Prostate gland (tissue), 2 donors: ENCODE measurements at regions of chr10 and their contacts with region 1.

Region 1: GRCh38 chr10:32055813-32056600 is at the start of gene KIF5B:
- DNase-seq: peak; percentile 86
- H3K4me3 ChIP-seq: peak within 1 kb of the TSS; percentile 66 to 97
- H3K27ac ChIP-seq: peak within 1 kb of the TSS; percentile 97 to 99
- H3K4me1 ChIP-seq: no peaks in the 10 kb centered on the region
- H3K27me3 ChIP-seq: no peaks in the 10 kb centered on the region
- CTCF ChIP-seq: peak in 1 of 4 experiments; percentile 8
- POLR2A ChIP-seq: peak; percentile 99
- total RNA-seq, gene KIF5B: 98.2 to 102 TPM

Region 2: GRCh38 chr10:31770307-31770902 is 285.6 kb before region 1 on chr10:
- intact Hi-C with region 1: no loop called
- DNase-seq: no peak
- H3K4me3 ChIP-seq: no peak overlapping the region
- H3K27ac ChIP-seq: no peak overlapping the region
- H3K4me1 ChIP-seq: no peaks in the 10 kb centered on the region
- H3K27me3 ChIP-seq: no peaks in the 10 kb centered on the region
- CTCF ChIP-seq: peak; percentile 31 to 75 (median 62)
- POLR2A ChIP-seq: no peak

Region 3: DNA sequence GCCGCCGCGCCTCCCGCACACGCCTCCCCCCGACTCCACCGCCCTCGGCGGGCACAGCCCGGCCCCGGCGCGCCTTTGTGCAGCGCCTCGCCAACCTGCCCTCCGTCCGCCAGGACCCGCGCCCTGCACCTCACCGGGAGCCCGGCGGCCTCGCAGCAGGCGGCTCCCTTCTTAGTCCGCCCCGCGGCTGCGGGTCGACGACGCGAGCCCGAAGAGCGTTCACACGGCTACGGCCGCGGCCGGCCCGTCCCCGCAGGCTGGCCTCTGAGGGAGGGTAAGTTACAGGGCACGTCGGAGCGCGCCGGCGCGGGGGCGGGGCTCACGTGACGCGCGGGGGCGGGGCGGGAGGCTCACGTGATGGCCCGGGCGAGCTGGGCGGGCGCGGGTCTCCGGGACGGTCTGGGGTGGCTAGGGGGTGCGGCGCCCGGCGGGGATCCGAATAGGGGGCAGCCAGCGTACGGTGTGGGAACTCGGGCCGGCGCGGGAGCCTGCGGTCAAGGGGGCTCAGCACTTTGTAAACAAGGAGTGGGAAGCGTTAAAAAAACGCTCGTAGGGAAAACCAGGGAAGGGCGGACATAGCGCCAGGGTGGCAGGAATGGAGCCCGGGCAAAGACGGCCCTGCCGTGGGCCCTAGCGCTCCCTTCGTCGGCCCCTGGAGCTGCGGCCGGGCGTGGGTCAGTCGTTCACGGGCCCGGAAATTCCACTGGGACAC is 127.3 kb before region 1 on chr10 and contains the start of gene ARHGAP12:
- intact Hi-C with region 1: loop called (anchors 10 kb)
- DNase-seq: peak; percentile 92
- H3K4me3 ChIP-seq: peak within 1 kb of the TSS; percentile 89 to 97
- H3K27ac ChIP-seq: peak within 1 kb of the TSS; percentile 97 to 98
- H3K4me1 ChIP-seq: peaks cover 3% of the 10 kb centered on the region
- H3K27me3 ChIP-seq: no peaks in the 10 kb centered on the region
- CTCF ChIP-seq: peak in 2 of 4 experiments; percentile 5 to 12
- POLR2A ChIP-seq: peak; percentile 99
- total RNA-seq, gene ARHGAP12: 34.3 to 44.9 TPM

Region 4: DNA sequence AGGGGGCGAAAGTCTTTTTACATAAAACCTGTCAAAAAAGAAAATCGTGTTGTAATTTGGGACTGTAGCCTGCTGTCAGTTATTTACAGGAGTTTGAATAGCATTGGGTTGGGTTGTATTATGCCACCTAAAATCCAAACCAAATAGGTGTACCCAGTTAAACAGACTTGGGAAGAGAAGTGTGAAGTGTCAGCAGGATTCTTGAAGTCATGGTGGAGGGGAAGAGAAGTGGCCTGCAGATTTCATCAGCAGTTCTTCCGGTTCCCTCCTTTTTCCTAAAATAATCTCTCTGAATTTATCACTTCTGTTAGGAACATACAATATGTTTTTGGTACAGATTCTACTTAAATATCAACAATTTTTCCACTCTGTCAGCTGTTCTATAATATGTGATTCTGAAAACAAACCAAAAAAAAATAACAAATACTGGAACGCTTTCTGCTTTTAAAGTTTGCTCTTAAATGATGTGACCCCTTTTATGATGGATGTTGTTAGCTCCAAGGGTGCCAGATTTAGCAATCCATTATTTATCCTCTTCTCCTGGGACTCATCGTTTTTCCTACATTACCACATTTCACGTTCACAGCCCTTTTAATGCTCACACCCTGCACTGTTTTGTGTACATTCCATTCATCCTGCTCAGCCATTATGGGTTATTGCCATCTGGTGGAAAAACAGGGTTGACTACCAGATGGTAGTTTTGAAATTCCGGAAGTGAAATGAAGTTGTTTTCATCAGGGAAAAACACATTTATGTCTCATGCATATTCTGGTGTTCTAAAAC is 108.7 kb before region 1 on chr10:
- intact Hi-C with region 1: no loop called
- DNase-seq: peak; percentile 71
- H3K4me3 ChIP-seq: no peak overlapping the region
- H3K27ac ChIP-seq: peak overlapping the region; percentile 46 to 57
- H3K4me1 ChIP-seq: no peaks in the 10 kb centered on the region
- H3K27me3 ChIP-seq: no peaks in the 10 kb centered on the region
- CTCF ChIP-seq: peak; percentile 32 to 71 (median 58)
- POLR2A ChIP-seq: no peak

Region 5: DNA sequence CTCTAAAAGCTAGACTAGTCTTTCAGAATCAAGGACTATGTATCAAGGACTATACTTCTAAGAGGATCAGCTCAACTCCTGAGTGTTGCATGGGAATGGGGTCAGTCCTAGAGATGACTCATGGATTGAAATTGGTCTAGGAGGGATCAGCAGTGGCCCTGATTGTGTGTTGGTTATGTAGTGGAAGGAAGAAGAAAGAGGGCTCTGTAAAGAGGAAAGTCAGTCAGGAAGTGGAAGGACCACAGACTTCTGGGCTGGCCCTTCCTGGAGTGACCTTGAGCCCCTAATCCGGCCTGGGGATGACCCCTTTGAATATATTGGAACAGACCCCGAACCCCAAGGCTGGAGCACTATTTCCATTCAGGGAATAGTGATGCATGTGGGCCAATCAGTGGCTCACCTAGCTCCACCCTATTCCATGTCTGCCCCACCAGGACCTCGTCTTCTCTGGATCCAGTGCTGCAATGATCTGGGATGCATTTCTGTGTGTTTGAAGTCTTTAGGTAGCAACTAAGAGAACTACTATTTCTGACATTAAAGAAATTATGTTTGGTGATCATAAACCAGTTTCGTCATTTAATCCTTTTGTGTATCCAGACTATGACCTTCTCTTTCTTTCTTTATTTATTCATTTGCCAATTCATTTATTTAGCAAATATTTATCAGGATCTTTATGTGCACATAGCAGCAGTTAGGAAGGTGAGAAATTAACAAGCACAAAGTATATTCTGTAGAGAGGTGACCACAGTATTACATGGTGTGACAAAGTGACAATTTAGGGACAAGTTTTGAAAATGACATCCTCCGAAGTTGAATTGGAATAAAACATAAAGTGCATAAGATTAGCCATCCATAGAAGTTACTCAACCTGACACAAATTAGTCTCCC is 48.9 kb after region 1 on chr10:
- intact Hi-C with region 1: no loop called
- DNase-seq: no peak
- H3K4me3 ChIP-seq: no peak overlapping the region
- H3K27ac ChIP-seq: no peak overlapping the region
- H3K4me1 ChIP-seq: peaks cover 11% of the 10 kb centered on the region
- H3K27me3 ChIP-seq: no peaks in the 10 kb centered on the region
- CTCF ChIP-seq: no peak
- POLR2A ChIP-seq: no peak

Region 6: DNA sequence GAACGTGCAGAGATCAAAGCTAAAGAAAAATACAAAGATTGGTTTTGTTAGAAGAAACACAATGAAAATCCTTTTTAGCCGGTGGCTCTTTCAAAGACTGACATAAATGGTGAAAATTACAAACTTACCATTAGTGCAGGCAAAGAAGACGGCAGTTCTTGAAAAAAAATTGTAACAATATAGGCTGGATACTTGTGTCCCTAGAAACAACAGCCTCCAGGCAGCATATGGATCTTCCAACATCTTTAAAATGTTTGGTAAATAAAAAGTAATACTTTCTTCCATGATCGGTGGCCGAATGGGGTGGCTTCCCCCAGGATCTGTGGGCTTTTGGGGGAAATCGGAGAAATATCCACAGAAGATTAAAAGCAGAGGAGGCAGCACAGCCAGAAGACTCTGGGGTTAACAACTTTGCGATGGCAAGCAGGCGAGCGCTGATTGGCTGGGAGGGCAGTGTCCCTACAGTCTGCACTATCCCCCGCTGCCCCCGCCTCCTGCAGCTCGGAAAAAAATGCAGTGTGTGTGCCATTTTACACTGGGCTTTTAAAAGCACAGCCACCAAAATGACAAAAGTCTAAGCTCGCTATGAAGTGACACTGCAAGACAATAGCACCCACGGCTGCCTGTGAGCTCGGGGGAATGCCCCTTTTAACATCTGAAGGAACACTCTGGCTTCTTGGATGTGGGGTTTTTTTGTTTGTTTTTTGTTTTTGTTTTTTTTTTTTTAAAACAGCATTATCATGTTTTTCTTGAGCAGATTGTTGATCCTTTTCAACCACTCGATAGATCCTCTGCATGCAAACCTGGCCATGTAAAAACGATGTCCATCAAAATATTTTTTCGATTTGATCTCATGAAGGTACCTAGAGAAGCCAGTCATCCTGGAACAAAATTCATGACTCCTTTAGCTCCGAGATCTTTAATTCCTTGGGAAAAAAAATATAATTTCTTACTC is 322.6 kb after region 1 on chr10:
- intact Hi-C with region 1: loop called (anchors 10 kb)
- DNase-seq: peak; percentile 95
- H3K4me3 ChIP-seq: peak overlapping the region; percentile 55 to 59
- H3K27ac ChIP-seq: peak overlapping the region; percentile 82 to 84
- H3K4me1 ChIP-seq: no peaks in the 10 kb centered on the region
- H3K27me3 ChIP-seq: no peaks in the 10 kb centered on the region
- CTCF ChIP-seq: no peak
- POLR2A ChIP-seq: peak; percentile 68